Natural killer cell (primary cell): ENCODE measurements at regions of chr3 and their contacts with region 1.

Region 1: GRCh38 chr3:156674046-156674910 is at the start of gene TIPARP:
- DNase-seq: peak; percentile 99 to 100
- ATAC-seq: peak; percentile 78 to 95 (median 82)
- H3K4me3 ChIP-seq: peak within 1 kb of the TSS; percentile 79
- H3K4me3 Mint-ChIP-seq: peak within 1 kb of the TSS; percentile 93
- H3K27ac ChIP-seq: peak within 1 kb of the TSS; percentile 85
- H3K27ac Mint-ChIP-seq: peak within 1 kb of the TSS; percentile 93 to 99
- H3K4me1 ChIP-seq: peaks cover 17% of the 10 kb centered on the region
- H3K4me1 Mint-ChIP-seq: peaks cover 48 to 49% of the 10 kb centered on the region in 2 donors
- H3K27me3 ChIP-seq: no peaks in the 10 kb centered on the region
- H3K27me3 Mint-ChIP-seq: no peaks in the 10 kb centered on the region
- CTCF ChIP-seq: peak; percentile 64
- total RNA-seq, gene TIPARP: 129 to 249 (median 147) TPM

Region 2: DNA sequence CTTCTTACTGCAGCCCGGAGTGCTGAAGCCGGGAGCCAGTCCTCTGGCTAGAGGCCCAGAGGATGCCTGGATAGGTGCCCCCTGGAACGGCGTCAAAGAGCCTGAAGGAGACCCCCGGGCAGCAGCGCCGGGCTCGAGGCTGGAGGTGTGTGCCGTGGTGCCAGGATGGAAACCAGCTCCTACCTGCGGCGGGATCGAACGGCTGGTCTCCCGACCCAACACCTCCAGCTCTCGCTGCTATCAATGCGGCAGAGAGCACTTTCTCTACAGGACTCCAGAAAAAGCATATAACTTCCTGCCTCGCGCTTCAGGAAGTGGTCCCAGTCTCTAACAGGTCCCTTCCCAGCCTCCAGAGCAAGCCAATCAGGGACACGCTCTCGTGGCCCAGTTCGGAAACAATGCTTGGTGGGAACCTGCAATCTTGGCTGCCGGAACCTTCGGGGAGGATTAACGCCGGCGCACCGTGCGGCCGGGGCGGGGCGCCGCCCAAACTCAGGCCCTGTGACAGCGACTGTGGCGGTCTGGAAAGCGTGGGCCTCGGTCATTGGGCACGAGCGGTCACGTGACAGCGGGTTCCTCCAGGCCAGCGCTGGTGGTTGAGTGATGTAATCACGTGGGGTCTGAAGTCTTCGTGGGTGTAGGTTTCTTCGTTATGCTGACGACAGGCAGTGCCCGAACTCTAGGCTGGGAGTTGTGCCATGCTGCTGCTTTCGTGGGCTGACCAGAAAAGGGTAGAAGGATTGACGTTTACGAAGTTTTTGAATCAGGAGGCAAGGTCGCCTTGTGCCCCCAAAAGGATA is 819.9 kb before region 1 on chr3 and contains the start of gene SLC33A1:
- intact Hi-C with region 1: loop called (anchors 5 kb)
- DNase-seq: peak; percentile 99 to 100
- ATAC-seq: peak; percentile 87 to 98 (median 88)
- H3K4me3 ChIP-seq: peak within 1 kb of the TSS; percentile 87
- H3K4me3 Mint-ChIP-seq: peak within 1 kb of the TSS; percentile 88
- H3K27ac ChIP-seq: peak within 1 kb of the TSS; percentile 97
- H3K27ac Mint-ChIP-seq: peak within 1 kb of the TSS; percentile 98
- H3K4me1 ChIP-seq: peaks cover 36% of the 10 kb centered on the region
- H3K4me1 Mint-ChIP-seq: peaks cover 42 to 46% of the 10 kb centered on the region in 2 donors
- H3K27me3 ChIP-seq: no peaks in the 10 kb centered on the region
- H3K27me3 Mint-ChIP-seq: no peaks in the 10 kb centered on the region
- CTCF ChIP-seq: no peak
- total RNA-seq, gene SLC33A1: 25.2 to 28.4 (median 27.2) TPM

Region 3: DNA sequence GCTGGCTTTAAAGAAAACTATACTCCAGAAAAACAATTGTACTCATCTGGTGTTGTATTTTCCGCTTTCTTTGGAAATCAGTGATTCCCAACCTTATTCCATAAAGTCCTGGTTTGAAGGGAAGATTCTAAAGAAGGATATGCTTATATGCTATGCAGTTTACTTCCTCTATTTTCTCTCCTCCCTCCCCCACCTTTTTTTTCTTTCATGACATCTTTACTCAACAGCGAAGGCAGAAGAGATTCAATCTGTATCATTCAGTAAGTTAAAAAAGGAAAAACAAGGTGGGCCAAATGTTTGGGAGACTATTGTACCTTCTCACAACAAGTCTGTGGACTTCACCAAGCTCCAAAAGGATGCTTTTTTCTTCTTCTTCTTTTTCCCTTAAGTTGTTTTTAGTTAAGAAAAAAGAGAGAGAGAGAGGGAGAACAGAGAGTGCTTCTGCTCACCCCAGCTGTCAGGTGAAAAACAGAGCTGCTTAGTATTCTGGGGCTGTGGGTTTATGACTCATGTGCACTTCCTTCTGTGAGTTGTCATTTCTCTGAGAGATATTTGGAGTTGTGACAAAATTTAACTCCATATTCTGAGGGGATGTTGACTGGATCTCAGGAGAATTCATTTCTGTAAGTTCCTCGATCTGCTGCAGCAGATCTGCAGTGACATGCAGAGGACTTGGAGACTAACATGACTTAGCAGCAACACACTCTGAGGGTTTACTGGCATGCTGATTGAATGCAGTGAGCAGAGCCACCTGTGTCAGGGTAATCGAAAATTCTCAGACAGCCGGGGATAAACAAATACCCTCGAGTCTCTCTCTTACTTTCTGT is 190.1 kb before region 1 on chr3:
- intact Hi-C with region 1: loop called (anchors 5 kb)
- DNase-seq: peak; percentile 33 to 77
- ATAC-seq: peak; percentile 74 to 88 (median 88)
- H3K4me3 ChIP-seq: peak overlapping the region; percentile 19
- H3K4me3 Mint-ChIP-seq: peak overlapping the region; percentile 74
- H3K27ac ChIP-seq: peak overlapping the region; percentile 92
- H3K27ac Mint-ChIP-seq: peak overlapping the region; percentile 77 to 80
- H3K4me1 ChIP-seq: peaks cover 10% of the 10 kb centered on the region
- H3K4me1 Mint-ChIP-seq: peaks cover 27 to 31% of the 10 kb centered on the region in 2 donors
- H3K27me3 ChIP-seq: no peaks in the 10 kb centered on the region
- H3K27me3 Mint-ChIP-seq: peaks cover under 1 to 2% of the 10 kb centered on the region in 2 donors
- CTCF ChIP-seq: no peak

Region 4: DNA sequence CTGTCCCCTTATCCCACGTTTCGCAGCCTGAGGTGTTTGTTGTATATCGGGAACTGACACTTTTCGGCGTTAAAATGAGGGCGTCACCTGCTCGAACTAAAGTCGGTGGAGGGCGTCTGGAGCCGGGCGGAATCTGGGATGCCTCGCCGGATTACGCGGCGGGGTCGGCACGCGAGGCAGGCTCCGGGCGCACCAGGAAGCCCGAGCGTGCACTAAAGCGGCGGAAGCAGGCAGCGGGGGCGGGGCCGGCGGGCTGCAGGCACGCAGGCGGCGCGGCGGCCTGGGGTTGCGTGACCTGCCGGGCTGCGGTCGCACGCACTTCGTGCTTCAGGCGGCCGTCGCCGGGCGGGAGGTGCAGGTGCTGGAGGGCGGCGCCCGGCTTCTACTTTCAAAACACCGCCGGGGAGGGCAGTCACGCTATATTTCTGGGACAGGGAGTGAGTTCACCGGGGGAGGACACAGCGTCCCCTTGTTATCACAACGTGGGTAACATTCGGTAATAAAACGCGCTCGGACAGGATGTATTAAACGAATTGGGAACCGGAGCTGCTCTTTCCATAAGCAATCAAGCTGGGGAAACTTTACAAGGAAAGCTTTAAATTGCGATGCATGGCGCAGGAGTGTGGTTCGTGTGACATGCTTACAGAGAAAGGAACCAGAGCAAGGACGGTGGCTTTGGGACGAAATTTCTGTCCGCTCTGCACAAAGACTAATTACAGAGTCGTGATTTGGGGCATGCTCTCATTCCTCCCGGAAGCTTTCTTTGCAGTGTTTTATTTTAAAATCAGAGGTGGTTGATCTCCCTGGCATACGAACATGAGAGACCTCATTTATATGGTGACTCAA is 142.7 kb after region 1 on chr3:
- intact Hi-C with region 1: loop called (anchors 2 kb)
- DNase-seq: peak; percentile 76 to 96
- ATAC-seq: peak; percentile 82 to 89 (median 85)
- H3K4me3 ChIP-seq: peak overlapping the region; percentile 55
- H3K4me3 Mint-ChIP-seq: peak overlapping the region; percentile 96
- H3K27ac ChIP-seq: peak overlapping the region; percentile 79
- H3K27ac Mint-ChIP-seq: peak overlapping the region; percentile 79 to 96
- H3K4me1 ChIP-seq: peaks cover 12% of the 10 kb centered on the region
- H3K4me1 Mint-ChIP-seq: peaks cover 31% of the 10 kb centered on the region in 2 donors
- H3K27me3 ChIP-seq: no peaks in the 10 kb centered on the region
- H3K27me3 Mint-ChIP-seq: no peaks in the 10 kb centered on the region
- CTCF ChIP-seq: no peak

Region 5: DNA sequence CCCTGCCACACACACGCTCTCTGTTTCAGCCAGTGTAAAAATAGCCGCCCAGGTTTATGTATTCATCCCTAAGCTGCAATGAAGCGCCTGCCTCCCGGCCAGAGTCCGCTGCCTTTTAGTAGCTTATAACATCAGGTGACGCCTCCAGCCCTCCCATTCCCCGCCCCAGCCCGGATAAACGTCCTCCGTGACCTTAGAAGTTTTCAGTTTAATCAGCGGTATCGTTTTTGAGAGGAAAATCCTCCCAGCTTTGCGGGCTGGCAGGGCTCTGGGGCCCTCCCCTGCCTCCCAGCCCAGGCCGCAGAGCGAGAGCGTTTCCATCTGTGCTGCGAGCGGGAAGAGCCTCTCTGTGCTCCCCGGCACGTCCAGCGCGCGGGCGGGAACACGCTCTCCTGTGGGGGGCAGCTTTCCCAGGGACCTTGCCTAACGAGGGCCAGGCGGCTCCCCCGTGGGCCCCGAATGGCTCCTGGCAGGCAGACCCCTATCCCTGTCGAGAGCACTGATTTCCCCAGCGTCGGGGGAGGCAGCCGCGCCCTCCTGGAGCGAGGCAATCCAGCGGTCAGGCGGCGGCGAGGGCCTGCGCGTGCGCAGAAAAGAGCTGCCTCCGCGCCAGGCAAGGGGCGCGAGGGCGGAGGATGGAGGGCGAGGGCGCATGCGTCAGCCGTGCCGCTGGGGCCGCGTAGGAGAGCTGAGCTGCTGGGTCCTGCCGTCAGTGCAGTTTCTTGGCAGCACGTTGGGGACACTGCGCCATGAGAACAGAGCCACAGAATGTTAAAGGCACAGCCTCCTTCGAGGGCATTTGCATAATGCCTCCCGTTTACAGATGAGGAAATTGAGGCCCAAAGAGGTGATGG is 414.6 kb after region 1 on chr3:
- intact Hi-C with region 1: loop called (anchors 2 kb)
- DNase-seq: peak; percentile 89 to 98
- ATAC-seq: peak; percentile 94 to 96 (median 95)
- H3K4me3 ChIP-seq: peak overlapping the region; percentile 91
- H3K4me3 Mint-ChIP-seq: peak overlapping the region; percentile 87
- H3K27ac ChIP-seq: peak overlapping the region; percentile 93
- H3K27ac Mint-ChIP-seq: peak overlapping the region; percentile 85 to 95
- H3K4me1 ChIP-seq: peaks cover 20% of the 10 kb centered on the region
- H3K4me1 Mint-ChIP-seq: peaks cover 14 to 21% of the 10 kb centered on the region in 2 donors
- H3K27me3 ChIP-seq: no peaks in the 10 kb centered on the region
- H3K27me3 Mint-ChIP-seq: peaks cover 12 to 15% of the 10 kb centered on the region in 2 donors
- CTCF ChIP-seq: peak; percentile 16

Region 6: GRCh38 chr3:157159762-157160657 is 485.7 kb after region 1 on chr3 and contains the start of gene CCNL1:
- intact Hi-C with region 1: loop called (anchors 1 kb)
- DNase-seq: peak; percentile 98 to 99
- ATAC-seq: peak; percentile 74 to 92 (median 80)
- H3K4me3 ChIP-seq: peak within 1 kb of the TSS; percentile 94
- H3K4me3 Mint-ChIP-seq: peak within 1 kb of the TSS; percentile 95
- H3K27ac ChIP-seq: peak within 1 kb of the TSS; percentile 97
- H3K27ac Mint-ChIP-seq: peak within 1 kb of the TSS; percentile 97 to 99
- H3K4me1 ChIP-seq: peaks cover 16% of the 10 kb centered on the region
- H3K4me1 Mint-ChIP-seq: peaks cover 56 to 62% of the 10 kb centered on the region in 2 donors
- H3K27me3 ChIP-seq: no peaks in the 10 kb centered on the region
- H3K27me3 Mint-ChIP-seq: no peaks in the 10 kb centered on the region
- CTCF ChIP-seq: no peak
- total RNA-seq, gene CCNL1: 1,104 to 1,331 (median 1,220) TPM